ENCODE measurements at regions of chr22 and their contacts with region 1.

Region 1: GRCh38 chr22:37588546-37589215 is 8.8 kb upstream of the LGALS2 start:
- DNase-seq: no peak
- H3K4me3 ChIP-seq: no peak overlapping the region
- H3K27ac ChIP-seq: no peak overlapping the region
- H3K27me3 ChIP-seq: peaks cover 5% of the 10 kb centered on the region
- CTCF ChIP-seq: no peak

Region 2: DNA sequence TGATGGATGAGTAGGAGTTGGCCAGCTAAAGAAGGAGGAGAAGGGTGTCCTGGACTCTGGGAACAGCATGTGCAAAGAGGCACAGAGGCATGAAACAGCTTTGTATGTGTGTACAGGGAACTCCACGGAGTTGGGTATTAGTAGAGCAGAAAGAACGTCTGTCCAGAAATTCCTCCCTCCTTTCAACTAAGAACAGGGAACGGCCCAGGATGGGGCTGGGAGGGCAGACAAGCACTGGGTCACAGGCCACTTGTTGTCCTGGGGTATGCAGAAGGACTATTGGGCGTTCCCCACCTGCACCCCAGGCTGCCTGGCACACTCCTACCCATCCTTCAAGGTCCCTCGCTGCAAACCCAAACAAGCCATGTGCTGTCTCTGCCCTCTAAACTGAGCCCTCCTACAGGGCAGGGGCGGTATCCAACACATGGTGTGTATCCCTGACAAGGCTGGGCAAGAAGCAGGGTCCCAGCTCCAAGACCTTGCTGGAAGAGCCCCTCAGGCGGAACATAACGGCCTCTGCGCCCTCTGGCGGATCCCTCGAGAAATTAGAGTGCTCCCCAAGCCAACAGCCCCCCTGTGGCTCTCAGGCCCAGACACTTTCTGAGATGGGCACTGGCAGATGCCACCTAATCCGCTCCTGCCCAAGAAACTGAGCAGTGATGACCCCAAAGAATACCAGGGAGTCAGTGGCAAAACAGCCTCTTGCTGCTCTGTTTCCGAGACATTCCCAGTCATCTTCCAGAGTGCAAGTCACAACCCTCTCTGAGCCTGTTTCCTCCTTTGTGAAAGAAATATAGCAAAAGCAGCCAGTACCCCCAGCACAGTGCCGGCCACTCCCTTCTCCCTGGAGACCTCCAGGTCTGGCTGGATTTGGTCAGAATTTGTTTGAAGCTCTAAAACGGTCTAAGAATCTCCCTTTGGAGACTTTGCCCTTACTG is 159.8 kb before region 1 on chr22:
- CTCF ChIA-PET with region 1: no interaction called
- POLR2A ChIA-PET with region 1: no interaction called
- DNase-seq: no peak
- H3K4me3 ChIP-seq: no peak overlapping the region
- H3K27ac ChIP-seq: no peak overlapping the region
- H3K27me3 ChIP-seq: no peaks in the 10 kb centered on the region
- CTCF ChIP-seq: peak; percentile 85

Region 3: DNA sequence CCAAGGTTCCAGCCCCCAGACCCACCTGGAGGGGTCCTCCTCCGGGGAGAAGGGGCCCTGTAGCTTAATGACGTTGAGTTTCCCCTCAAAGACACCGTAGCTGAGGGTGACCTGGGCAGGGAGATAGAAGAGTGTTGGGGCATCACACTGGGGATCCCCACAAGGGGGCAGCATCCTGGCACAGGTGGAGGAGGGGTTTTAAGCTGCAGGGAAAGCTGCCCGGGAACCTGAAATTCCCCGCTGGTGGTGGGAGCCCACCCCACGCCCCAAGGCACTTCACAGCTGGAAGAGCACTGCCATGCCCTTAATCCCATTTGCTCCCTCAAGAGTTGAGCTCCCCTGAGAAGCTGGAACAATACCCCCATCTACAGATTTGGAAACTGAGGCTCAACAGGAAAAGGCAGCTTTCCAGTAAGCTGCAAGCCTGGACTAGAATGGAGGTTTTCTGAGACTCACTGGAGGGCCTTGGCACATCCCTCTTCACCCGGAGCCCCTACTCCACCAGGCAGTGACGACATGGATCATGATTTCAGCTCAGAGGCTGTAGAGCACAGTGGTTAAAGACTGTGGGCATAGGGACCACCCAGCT is 116.2 kb before region 1 on chr22:
- CTCF ChIA-PET with region 1: interaction called, 17 read pairs
- POLR2A ChIA-PET with region 1: no interaction called
- DNase-seq: no peak
- H3K4me3 ChIP-seq: no peak overlapping the region
- H3K27ac ChIP-seq: no peak overlapping the region
- H3K27me3 ChIP-seq: peaks cover 53% of the 10 kb centered on the region
- CTCF ChIP-seq: peak; percentile 69

Region 4: DNA sequence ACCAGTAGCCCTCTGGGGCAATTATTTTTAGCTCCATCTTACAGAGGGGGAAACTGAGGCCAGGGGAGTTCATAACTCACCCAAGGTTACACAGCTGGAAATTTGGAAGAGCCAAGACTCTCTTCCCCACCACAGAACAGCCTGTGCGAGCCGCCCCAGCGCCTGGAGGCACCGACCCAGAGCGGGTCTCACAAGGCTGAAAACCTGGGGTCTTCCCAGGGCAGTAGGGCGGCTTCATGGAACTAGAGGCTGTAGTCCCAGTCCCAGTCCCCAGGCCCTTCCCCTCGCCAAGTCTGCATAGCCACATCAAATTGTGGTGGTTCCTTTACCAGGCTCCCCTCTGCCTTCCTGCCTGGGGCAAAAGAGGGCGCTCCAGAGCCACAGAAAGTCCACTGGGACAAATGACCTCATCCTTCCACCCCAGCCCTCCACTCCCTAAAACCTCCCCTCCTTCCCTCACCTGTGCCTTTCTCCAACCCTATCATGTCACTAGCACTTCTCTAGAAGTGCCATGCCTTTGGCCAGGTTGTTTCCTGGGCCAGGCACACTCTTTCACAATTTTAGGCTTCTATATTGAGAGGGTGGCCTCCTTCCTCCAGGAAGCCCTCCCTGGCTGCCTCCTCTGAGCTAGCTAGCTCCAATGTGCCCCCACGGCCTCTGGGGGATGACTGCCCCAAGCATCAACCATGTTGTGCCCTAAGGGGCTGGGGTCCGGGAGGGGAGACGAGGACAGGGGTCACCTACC is 43.6 kb before region 1 on chr22:
- CTCF ChIA-PET with region 1: interaction called, 192 read pairs
- POLR2A ChIA-PET with region 1: interaction called, 10 read pairs
- DNase-seq: no peak
- H3K4me3 ChIP-seq: peak overlapping the region; percentile 50
- H3K27ac ChIP-seq: peak overlapping the region; percentile 91
- H3K27me3 ChIP-seq: no peaks in the 10 kb centered on the region
- CTCF ChIP-seq: peak; percentile 83

Region 5: GRCh38 chr22:37566903-37567820 is 21.5 kb before region 1 on chr22:
- CTCF ChIA-PET with region 1: interaction called, 65 read pairs
- POLR2A ChIA-PET with region 1: interaction called, 12 read pairs
- DNase-seq: no peak
- H3K4me3 ChIP-seq: no peak overlapping the region
- H3K27ac ChIP-seq: peak overlapping the region; percentile 11
- H3K27me3 ChIP-seq: no peaks in the 10 kb centered on the region
- CTCF ChIP-seq: peak; percentile 85

Region 6: GRCh38 chr22:37601540-37602442 is 13.1 kb after region 1 on chr22:
- CTCF ChIA-PET with region 1: interaction called, 37 read pairs
- POLR2A ChIA-PET with region 1: no interaction called
- DNase-seq: no peak
- H3K4me3 ChIP-seq: no peak overlapping the region
- H3K27ac ChIP-seq: no peak overlapping the region
- H3K27me3 ChIP-seq: peaks cover 15% of the 10 kb centered on the region
- CTCF ChIP-seq: no peak

Region 7: GRCh38 chr22:37676736-37677492 is 88.2 kb after region 1 on chr22:
- CTCF ChIA-PET with region 1: no interaction called
- POLR2A ChIA-PET with region 1: no interaction called
- DNase-seq: peak; percentile 96
- H3K4me3 ChIP-seq: peak overlapping the region; percentile 97
- H3K27ac ChIP-seq: peak overlapping the region; percentile 72
- H3K27me3 ChIP-seq: no peaks in the 10 kb centered on the region
- CTCF ChIP-seq: no peak

Measured in AG04450 (cell line).